Testis (tissue), 5 donors: ENCODE measurements at regions of chr1 and their contacts with region 1.

Region 1: GRCh38 chr1:209692745-209693504 is 11.7 kb upstream of the HSD11B1 start:
- DNase-seq: peak; percentile 82
- H3K4me3 ChIP-seq: no peak overlapping the region
- H3K27ac ChIP-seq: no peak overlapping the region
- H3K4me1 ChIP-seq: peaks cover 4% of the 10 kb centered on the region
- H3K27me3 ChIP-seq: no peaks in the 10 kb centered on the region
- CTCF ChIP-seq: peak; percentile 75 to 83 (median 76)
- POLR2A ChIP-seq: no peak

Region 2: DNA sequence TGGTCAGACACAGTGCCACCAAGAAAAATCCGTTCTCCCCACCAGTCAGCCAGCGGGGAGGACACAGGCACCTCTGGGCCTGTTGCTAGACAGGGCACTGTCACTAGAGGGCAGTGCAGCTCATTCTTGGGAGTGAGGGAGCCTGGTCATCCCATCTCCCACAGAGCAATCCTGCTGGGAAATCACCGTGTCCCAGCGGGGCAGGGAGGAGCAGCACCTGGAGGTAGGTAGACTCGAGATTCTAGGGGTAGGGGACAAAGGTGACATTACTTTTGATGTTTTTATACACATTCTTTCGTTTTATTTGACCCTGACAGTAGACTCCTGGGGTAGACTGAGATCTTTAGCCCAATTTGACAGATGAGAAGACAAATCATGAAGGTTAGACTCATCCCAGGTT is 116.1 kb before region 1 on chr1:
- intact Hi-C with region 1: loop called (anchors 5 kb)
- DNase-seq: peak; percentile 89
- H3K4me3 ChIP-seq: no peak overlapping the region
- H3K27ac ChIP-seq: no peak overlapping the region
- H3K4me1 ChIP-seq: no peaks in the 10 kb centered on the region
- H3K27me3 ChIP-seq: no peaks in the 10 kb centered on the region
- CTCF ChIP-seq: peak; percentile 79 to 88 (median 83)
- POLR2A ChIP-seq: no peak

Region 3: GRCh38 chr1:209747580-209748262 is 54.8 kb after region 1 on chr1:
- intact Hi-C with region 1: loop called (anchors 10 kb)
- DNase-seq: peak; percentile 93
- H3K4me3 ChIP-seq: peak overlapping the region; percentile 31 to 37
- H3K27ac ChIP-seq: peak overlapping the region in 1 of 2 donors; percentile 68
- H3K4me1 ChIP-seq: peaks cover 22% of the 10 kb centered on the region
- H3K27me3 ChIP-seq: no peaks in the 10 kb centered on the region
- CTCF ChIP-seq: peak; percentile 96 to 99 (median 98)
- POLR2A ChIP-seq: no peak